ENCODE measurements at regions of chr16 and their contacts with region 1.

Region 1: GRCh38 chr16:77584205-77584859 is 138.0 kb upstream of the NUDT7 start:
- DNase-seq: peak; percentile 55
- H3K4me3 ChIP-seq: no peak overlapping the region; a peak in 1 of 4 replicates
- H3K27ac ChIP-seq: no peak overlapping the region
- H3K4me1 ChIP-seq: no peaks in the 10 kb centered on the region; a peak in 1 of 4 replicates
- H3K27me3 ChIP-seq: no peaks in the 10 kb centered on the region
- CTCF ChIP-seq: peak; percentile 95
- EP300 ChIP-seq: no peak
- RAD21 ChIP-seq: peak; percentile 93

Region 2: GRCh38 chr16:77236063-77236511 is 348.2 kb before region 1 on chr16:
- CTCF ChIA-PET with region 1: interaction called, 317 read pairs
- POLR2A ChIA-PET with region 1: no interaction called
- DNase-seq: peak; percentile 82
- H3K4me3 ChIP-seq: peak overlapping the region; percentile 21 to 47; a peak in 2 of 4 replicates
- H3K27ac ChIP-seq: no peak overlapping the region
- H3K4me1 ChIP-seq: no peaks in the 10 kb centered on the region; a peak in 1 of 4 replicates
- H3K27me3 ChIP-seq: no peaks in the 10 kb centered on the region
- CTCF ChIP-seq: peak; percentile 99
- EP300 ChIP-seq: no peak
- RAD21 ChIP-seq: peak; percentile 100

Region 3: DNA sequence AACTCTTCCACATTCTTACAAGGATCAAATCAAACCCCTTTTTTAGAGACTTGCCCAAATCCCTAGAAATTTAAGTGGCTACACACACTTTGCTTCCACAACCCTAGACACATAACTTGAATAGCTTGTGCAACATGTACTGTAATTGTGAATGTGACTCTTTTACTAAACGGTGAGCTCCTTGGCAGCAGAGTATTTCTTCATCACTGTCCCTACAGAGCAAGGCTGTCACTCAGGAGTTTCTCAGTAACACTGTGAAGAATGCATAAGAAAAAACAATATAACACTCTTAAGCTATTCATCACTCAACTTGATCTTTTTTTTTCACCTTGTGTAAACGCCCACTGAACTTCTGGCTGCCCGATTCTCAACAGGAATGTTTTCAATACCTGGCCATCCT is 95.7 kb before region 1 on chr16:
- CTCF ChIA-PET with region 1: no interaction called
- POLR2A ChIA-PET with region 1: no interaction called
- DNase-seq: no peak
- H3K4me3 ChIP-seq: no peak overlapping the region
- H3K27ac ChIP-seq: no peak overlapping the region
- H3K4me1 ChIP-seq: no peaks in the 10 kb centered on the region
- H3K27me3 ChIP-seq: no peaks in the 10 kb centered on the region
- CTCF ChIP-seq: no peak
- EP300 ChIP-seq: no peak
- RAD21 ChIP-seq: no peak

Region 4: DNA sequence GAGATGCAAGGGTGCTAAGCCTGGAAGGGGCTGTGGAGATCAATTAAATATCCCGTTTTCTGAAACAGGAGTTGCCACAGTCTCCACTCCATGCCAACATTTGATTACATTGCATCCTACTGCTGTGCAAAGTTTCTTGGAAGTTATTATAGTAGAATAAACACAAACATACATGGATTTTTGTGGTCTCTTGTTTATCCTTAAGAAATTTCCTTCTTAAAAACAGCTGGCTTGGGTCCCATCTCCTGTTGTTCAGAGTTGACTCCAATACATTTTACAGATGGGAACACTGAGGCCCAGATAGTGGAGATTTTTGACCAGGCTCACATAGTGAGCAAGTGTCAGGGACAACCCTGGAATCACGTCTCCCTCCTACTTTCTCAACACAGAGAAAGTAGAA is 25.5 kb before region 1 on chr16:
- CTCF ChIA-PET with region 1: interaction called, 26 read pairs
- POLR2A ChIA-PET with region 1: no interaction called
- DNase-seq: no peak
- H3K4me3 ChIP-seq: no peak overlapping the region
- H3K27ac ChIP-seq: no peak overlapping the region
- H3K4me1 ChIP-seq: no peaks in the 10 kb centered on the region
- H3K27me3 ChIP-seq: no peaks in the 10 kb centered on the region
- CTCF ChIP-seq: no peak
- EP300 ChIP-seq: no peak
- RAD21 ChIP-seq: no peak

Region 5: DNA sequence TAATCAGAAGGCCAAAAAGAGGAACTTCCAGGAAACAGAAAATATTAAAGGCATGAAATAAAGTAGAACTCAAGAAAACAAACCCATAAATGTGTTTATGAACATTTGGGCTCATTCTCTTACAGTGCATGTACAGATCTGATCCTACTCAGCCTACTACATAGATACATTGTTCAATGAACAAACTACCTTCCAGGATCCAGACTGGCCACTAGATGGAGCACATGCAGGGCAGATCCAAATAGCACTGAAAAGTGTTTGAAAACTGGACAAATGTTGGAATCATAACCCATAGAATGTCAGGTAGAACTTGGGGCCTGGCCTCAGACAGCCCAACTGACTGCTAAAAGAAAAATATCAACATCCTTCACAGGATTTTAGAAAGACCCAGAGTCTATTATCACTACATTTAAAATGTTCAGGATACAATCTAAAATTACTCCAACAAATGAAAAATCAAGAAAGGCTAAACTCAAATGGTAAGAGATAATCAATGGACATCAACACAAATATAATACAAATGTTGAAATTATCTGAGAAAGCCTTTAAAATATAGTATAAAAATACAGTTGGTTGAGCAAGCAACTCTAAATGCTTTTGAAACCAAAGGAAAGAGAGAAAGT is 15.6 kb after region 1 on chr16:
- CTCF ChIA-PET with region 1: interaction called, 13 read pairs
- POLR2A ChIA-PET with region 1: no interaction called
- DNase-seq: peak; percentile 30
- H3K4me3 ChIP-seq: peak overlapping the region in 1 of 2 experiments; percentile 41; a peak in 1 of 4 replicates
- H3K27ac ChIP-seq: no peak overlapping the region
- H3K4me1 ChIP-seq: no peaks in the 10 kb centered on the region
- H3K27me3 ChIP-seq: no peaks in the 10 kb centered on the region
- CTCF ChIP-seq: peak; percentile 85
- EP300 ChIP-seq: no peak
- RAD21 ChIP-seq: peak; percentile 65

Region 6: GRCh38 chr16:77951775-77952174 is 367.4 kb after region 1 on chr16:
- CTCF ChIA-PET with region 1: no interaction called
- POLR2A ChIA-PET with region 1: no interaction called
- DNase-seq: peak; percentile 22
- H3K4me3 ChIP-seq: no peak overlapping the region
- H3K27ac ChIP-seq: no peak overlapping the region
- H3K4me1 ChIP-seq: peaks cover 0 to 3% of the 10 kb centered on the region in 2 experiments; a peak in 1 of 4 replicates
- H3K27me3 ChIP-seq: no peaks in the 10 kb centered on the region
- CTCF ChIP-seq: peak; percentile 38
- EP300 ChIP-seq: no peak
- RAD21 ChIP-seq: peak; percentile 27

Measured in SK-N-SH (cell line).